GM10248 (cell line): ENCODE measurements at regions of chr2 and their contacts with region 1.

Region 1: GRCh38 chr2:149573760-149574159 is 13.8 kb downstream of the MMADHC start:
- DNase-seq: no peak
- CTCF ChIP-seq: peak; percentile 25

Region 2: DNA sequence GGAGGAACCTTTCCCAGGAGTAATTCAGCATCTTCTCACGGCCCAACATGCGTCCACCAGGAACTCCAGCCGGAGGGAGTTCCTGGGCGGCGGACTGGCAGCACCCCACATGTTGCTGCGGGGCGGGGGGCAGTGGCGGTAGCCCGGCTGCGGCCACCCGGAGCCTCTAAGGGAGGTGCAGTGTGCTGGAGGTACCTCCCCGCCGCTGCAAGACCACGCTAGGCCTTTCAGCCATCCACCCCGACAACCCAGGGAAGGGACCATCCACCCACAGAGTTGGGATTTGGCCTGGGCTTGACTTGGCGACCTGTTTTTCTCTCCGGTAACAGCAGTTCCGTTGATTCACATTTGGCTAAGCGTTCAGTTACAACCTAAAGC is 242.7 kb before region 1 on chr2:
- CTCF ChIA-PET with region 1: no interaction called
- POLR2A ChIA-PET with region 1: no interaction called
- DNase-seq: no peak
- CTCF ChIP-seq: no peak

Region 3: DNA sequence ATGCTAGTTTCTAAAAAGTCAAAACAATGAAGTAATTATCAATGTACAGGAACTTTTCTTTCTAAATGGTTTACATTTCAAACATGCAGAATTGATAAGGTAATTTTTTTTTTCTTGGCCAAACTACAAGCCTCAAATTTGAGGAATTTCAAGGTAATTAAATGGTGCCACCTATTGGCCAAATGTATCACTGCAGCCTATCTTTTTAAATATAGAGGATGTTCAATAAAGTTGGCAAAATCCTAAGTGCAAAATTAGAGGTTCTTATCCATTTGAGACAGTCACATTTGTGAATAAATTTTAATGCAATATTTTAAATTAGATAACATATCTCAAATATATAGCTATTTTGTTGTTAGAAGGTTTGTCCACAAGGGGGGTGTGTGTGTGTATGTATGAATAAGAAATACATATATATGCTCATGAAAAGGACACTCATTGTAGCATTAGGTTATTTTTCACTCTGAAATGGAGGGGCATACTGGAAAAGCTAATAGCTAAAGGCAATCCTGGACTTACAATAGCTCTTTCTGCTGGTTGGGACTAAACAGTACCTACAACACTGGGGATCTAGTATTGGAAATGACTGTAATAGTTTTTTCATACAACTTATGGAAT is 12.3 kb before region 1 on chr2:
- CTCF ChIA-PET with region 1: interaction called, 18 read pairs
- POLR2A ChIA-PET with region 1: no interaction called
- DNase-seq: peak; percentile 22
- CTCF ChIP-seq: peak; percentile 72